ENCODE measurements at regions of chr21 and their contacts with region 1.

Region 1: GRCh38 chr21:37220981-37221664 is 46.0 kb downstream of the VPS26C start:
- DNase-seq: peak; percentile 89
- H3K4me3 Mint-ChIP-seq: peak overlapping the region; percentile 90
- H3K27ac Mint-ChIP-seq: peak overlapping the region; percentile 91
- H3K4me1 Mint-ChIP-seq: peaks cover 48% of the 10 kb centered on the region
- H3K27me3 Mint-ChIP-seq: peaks cover 1% of the 10 kb centered on the region

Region 2: GRCh38 chr21:37079211-37079824 is 141.8 kb before region 1 on chr21:
- intact Hi-C with region 1: loop called (anchors 5 kb)
- DNase-seq: no peak
- H3K4me3 Mint-ChIP-seq: no peak overlapping the region
- H3K27ac Mint-ChIP-seq: no peak overlapping the region
- H3K4me1 Mint-ChIP-seq: peaks cover 27% of the 10 kb centered on the region
- H3K27me3 Mint-ChIP-seq: peaks cover 2% of the 10 kb centered on the region

Region 3: DNA sequence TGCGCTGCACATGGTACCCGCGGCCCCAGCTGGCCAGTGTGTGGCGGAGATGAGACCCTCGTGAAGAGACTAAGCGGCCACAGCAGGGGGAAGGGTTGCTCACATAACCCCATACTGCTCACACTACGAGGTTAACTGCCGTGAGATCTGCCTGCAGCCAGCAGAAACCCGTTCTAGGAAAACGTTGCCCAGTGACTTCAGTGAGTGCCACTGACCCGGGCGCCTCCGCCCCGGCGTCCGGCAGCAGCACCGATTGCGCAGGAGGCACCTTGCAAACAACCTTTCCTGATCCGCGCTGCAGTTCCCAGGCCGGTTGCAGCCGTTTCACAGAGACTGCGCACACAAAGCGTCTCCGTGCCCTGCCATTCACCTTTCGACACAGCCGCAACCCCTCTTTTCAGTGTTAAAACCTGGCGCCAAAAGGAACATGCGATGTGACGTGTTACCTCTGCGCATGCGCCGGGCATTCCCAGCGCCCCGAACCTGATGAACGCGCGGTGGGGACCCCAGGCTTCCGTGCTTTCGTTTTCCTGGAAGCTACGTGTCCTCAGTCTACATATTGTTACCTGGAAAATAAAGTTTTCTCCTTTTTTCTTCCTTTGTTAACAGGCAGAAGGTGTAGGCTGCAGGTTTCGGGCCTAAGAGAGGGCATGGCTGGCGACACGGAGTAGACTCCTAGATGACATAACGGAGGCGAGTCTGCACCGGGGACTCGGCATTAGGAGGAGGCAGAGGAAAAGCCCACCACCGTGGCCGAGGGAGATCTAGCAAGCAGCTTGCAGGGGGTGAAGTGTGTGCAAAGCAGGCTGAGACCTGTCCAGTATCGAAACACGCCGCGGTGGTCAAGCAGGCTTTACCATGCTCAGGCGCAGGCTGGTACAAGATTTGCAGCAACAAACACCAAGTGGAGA is 37.1 kb after region 1 on chr21:
- intact Hi-C with region 1: loop called (anchors 1 kb)
- DNase-seq: peak; percentile 83
- H3K4me3 Mint-ChIP-seq: peak overlapping the region; percentile 95
- H3K27ac Mint-ChIP-seq: peak overlapping the region; percentile 100
- H3K4me1 Mint-ChIP-seq: peaks cover 56% of the 10 kb centered on the region
- H3K27me3 Mint-ChIP-seq: peaks cover 2% of the 10 kb centered on the region